Testis (tissue), 5 donors: ENCODE measurements at regions of chr1 and their contacts with region 1.

Region 1: DNA sequence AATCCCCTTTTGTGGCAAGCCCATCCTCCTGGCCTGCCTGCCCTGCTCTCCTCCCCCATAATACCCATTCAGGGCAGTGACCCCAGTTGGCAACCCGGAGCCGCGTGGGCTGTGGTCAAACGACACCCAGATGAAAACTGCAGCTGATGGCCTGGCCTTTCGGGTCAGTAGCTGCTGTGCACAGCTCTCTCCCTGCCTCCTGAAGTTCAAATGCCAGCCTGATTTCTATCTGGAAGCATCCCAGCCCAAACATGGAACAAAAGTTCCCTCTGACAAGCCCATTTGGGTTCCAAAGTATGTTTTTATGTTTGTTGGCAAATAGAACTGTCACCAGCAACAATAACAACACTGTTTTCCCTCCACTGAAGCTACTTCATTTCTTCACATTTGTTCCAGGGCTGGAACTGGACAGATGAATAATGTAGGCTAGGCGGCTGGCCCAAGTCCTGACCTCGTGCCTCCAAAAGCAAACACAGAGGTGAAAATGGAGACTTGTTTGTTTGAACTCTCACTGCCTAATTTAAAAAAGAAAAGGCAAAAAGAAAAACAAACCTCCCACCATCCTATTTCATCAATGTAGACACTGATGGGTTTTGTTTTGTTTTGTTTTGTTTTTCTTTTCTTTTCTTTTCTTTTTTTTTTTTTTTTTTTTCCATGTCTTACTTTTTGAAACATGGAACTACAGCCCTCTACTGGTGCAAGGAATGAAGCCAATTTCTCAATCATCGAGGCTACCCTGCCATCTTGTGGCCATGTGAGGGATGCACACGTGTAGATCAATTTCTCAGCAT is 179.0 kb downstream of the ADSS2 start:
- DNase-seq: peak; percentile 80
- H3K4me3 ChIP-seq: no peak overlapping the region
- H3K27ac ChIP-seq: peak overlapping the region in 1 of 2 donors; percentile 19
- H3K4me1 ChIP-seq: peaks cover 5% of the 10 kb centered on the region
- H3K27me3 ChIP-seq: no peaks in the 10 kb centered on the region
- CTCF ChIP-seq: peak; percentile 87 to 99 (median 95)
- POLR2A ChIP-seq: no peak

Region 2: DNA sequence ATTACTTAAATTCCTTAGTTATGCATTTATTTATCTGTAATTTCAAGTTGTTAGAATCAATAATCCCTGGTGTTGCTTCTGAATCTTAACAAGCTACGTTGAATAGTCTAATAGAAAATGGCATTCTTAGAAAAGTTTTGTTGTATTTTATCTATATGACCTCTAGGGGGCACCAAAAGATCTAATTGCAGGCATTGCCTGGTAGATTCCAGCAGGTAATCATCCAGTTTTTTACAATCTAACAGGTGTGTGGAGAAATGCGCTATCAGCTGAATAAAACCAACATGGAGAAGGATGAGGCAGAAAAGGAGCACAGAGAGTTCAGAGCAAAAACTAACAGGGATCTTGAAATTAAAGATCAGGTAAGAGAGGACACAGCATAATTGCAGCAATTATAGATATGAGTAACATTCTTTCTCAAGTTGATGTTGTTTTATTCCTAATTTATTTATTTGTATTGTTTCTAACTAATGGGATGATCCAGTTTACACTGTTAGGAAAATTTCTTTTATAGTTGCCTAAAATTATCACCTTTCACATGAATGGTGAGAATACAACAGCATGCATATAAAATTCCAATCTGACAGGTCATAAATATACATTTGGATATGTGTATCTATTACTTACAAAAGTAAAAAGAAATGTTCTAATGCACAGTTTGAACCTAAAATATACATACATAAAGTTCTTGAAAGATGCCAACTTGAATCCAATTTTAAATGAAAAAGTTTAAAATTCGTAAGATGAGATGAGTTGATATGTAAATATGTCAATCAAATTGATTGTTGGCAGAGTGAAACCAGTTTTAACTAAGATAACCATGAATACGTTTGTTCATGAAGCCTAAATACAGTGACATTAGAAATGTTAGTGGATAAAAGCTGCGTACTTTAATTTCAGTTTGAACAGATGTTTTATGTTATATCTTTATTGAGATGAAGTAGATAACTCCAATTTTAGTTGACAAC is 928.4 kb before region 1 on chr1:
- intact Hi-C with region 1: loop called (anchors 10 kb)
- DNase-seq: no peak
- H3K4me3 ChIP-seq: no peak overlapping the region
- H3K27ac ChIP-seq: no peak overlapping the region
- H3K4me1 ChIP-seq: no peaks in the 10 kb centered on the region
- H3K27me3 ChIP-seq: no peaks in the 10 kb centered on the region
- CTCF ChIP-seq: peak; percentile 40 to 87 (median 63)
- POLR2A ChIP-seq: no peak